Common myeloid progenitor, CD34-positive (primary cell): ENCODE measurements at regions of chr9 and their contacts with region 1.

Region 1: GRCh38 chr9:68584189-68585033 is 43.7 kb upstream of the TMEM252 start:
- DNase-seq: peak; percentile 92 to 97 (median 92)
- H3K4me3 ChIP-seq: no peak overlapping the region
- H3K27ac ChIP-seq: no peak overlapping the region
- H3K4me1 ChIP-seq: no peaks in the 10 kb centered on the region
- H3K27me3 ChIP-seq: no peaks in the 10 kb centered on the region

Region 2: DNA sequence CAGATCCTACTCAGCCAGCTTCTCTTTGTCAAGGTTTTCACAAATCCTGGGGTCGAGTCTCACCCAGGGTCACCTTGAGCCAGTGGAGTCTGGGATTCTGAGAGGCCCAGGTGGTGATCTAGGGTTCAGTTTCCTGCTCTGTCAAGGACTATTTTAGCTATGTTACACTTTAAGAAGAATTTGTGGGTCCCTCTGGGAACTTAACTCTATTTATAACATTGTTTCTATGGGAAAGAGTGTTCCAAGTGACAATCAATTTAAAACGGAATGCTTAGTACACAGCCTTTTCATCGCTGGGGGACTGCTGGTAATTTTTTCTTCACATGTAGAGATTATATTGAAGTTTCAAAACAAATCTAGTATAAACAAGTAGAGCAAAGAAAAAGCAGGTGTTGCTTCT is 16.8 kb before region 1 on chr9:
- CTCF ChIA-PET with region 1: interaction called, 11 read pairs
- POLR2A ChIA-PET with region 1: no interaction called
- DNase-seq: no peak
- H3K4me3 ChIP-seq: no peak overlapping the region
- H3K27ac ChIP-seq: no peak overlapping the region
- H3K4me1 ChIP-seq: peaks cover 0 to 19% (median under 1%) of the 10 kb centered on the region in 4 experiments
- H3K27me3 ChIP-seq: no peaks in the 10 kb centered on the region

Region 3: DNA sequence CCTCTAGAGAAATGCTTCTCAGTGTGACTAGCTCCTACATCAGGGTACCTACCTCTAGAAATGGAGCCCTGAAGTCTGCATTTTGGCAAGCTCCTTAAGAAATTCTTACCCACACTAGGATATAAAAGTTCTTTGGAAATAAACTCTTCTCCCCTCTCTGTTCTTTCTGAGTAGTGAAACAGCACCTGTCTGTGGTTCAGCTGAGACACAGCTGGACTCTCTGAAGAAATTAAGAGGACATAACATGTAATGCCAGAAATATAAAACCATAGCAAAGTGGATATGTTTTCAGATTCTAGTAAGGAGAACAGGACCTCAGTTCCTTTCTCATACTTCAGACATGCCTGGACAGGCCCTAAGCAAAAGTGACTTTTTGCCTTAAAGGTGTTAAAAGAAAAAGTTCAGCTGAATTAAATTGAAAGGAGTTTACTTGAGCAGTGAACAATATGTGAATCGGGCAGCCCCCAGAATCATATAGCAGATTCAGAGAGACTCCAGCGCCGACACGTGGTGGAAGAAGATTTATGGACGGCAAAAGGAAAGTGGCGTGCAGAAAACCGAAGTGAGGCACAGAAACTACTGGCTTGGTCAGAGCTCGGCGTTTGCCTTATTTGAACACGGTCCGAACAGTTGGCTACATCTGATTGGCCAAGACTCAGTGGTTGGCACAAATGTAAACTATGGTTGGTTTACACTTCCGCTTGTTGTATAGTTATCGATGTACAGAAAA is 365.0 kb after region 1 on chr9:
- CTCF ChIA-PET with region 1: interaction called, 24 read pairs
- POLR2A ChIA-PET with region 1: no interaction called
- DNase-seq: peak; percentile 38 to 63 (median 62)
- H3K4me3 ChIP-seq: no peak overlapping the region
- H3K27ac ChIP-seq: no peak overlapping the region
- H3K4me1 ChIP-seq: peaks cover 3 to 24% (median 7%) of the 10 kb centered on the region in 4 experiments
- H3K27me3 ChIP-seq: no peaks in the 10 kb centered on the region

Region 4: DNA sequence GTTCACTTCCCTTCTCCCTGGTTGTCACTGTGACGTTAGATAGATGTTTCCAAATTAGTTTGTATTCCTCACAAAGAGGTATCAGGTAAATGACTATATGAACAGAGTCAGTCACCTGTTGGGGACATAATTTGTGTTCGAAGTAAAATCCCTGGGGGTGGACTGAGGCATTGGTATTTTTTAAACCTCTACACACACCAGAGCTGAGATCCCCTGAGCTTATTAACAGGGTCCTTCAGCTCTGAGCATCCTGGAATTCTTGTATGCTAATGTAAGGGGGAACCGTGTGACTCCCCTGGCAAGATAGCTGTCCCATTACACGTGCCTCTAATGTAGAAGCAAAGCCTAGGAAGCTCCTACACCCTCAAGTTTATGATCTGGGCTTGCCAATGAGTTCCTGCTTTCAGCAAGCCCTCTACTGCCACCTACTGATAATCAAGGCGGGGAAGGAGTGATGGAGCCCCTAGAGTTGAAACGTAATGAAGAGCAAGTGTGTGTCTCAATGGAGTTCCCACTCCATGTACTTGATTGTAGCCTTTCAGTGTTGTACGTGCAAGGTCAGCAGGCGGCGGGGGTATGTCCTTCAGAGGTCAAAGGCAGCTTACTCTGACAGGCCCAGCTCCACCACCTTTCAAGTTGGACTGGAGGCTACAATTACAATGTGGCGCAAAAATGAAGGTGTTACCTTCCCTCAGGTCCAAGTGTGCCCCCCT is 415.1 kb after region 1 on chr9:
- CTCF ChIA-PET with region 1: interaction called, 17 read pairs
- POLR2A ChIA-PET with region 1: no interaction called
- DNase-seq: peak; percentile 82 to 87 (median 87)
- H3K4me3 ChIP-seq: no peak overlapping the region
- H3K27ac ChIP-seq: no peak overlapping the region
- H3K4me1 ChIP-seq: peaks cover 20 to 47% (median 33%) of the 10 kb centered on the region in 4 experiments
- H3K27me3 ChIP-seq: no peaks in the 10 kb centered on the region